ENCODE measurements at regions of chr1 and their contacts with region 1.

Region 1: DNA sequence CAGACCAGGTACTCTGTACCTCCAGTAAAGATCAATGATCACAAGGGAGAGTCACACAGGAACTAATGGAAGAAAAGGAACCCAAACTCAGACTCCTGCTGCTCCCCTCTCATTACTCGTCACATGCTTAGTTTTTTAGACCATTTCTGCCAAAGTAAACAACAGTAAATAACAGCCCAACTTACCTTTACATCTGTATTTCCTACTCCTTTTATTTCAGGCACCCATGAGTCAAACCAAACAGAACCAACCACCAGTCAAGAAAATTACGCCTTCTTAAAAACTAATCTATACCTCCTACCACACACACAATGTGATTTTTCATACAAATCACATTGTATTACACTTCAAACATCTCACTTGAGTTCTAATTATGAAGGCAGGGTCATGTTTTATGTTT is 61.4 kb upstream of the HTR1D start:
- DNase-seq: no peak
- ATAC-seq: no peak

Region 2: DNA sequence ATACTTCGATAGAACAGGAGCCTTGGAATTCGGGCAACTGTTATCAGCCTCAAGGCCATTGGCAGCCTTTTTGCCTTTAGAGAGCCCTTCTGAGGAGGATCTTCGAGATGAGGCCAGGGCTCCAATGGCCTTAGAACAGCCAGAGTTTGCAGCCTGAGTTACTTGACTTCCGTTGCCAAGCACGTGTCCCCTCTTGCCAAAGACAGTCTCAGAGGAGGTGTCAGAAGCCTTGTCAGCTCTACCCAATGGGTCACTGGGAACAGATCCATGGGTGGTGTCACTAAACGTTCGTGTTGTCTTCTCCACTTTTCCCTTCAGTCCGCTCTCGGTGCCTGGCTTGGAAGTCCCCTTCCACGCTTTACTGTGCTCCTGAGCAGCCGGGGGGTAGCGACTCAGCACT is 186.3 kb before region 1 on chr1:
- intact Hi-C with region 1: loop called in 1 of 2 experiments (anchors 5 kb)
- DNase-seq: no peak
- ATAC-seq: peak; percentile 28 to 78

Measured in left cardiac atrium (tissue), 4 donors.